ENCODE measurements at regions of chr3 and their contacts with region 1.

Region 1: GRCh38 chr3:183385698-183386613 is 42.5 kb downstream of the MCF2L2 start:
- DNase-seq: peak; percentile 76
- H3K4me3 ChIP-seq: no peak overlapping the region
- H3K27ac ChIP-seq: no peak overlapping the region
- H3K4me1 ChIP-seq: no peaks in the 10 kb centered on the region
- H3K27me3 ChIP-seq: no peaks in the 10 kb centered on the region
- CTCF ChIP-seq: peak; percentile 65 to 71
- POLR2A ChIP-seq: no peak

Region 2: GRCh38 chr3:183122257-183122932 is 263.6 kb before region 1 on chr3:
- CTCF ChIA-PET with region 1: interaction called, 105 read pairs
- POLR2A ChIA-PET with region 1: no interaction called
- dilution Hi-C with region 1: no loop called
- intact Hi-C with region 1: loop called (anchors 1 kb)
- DNase-seq: peak; percentile 95
- H3K4me3 ChIP-seq: no peak overlapping the region
- H3K27ac ChIP-seq: peak overlapping the region; percentile 58
- H3K4me1 ChIP-seq: peaks cover 27% of the 10 kb centered on the region
- H3K27me3 ChIP-seq: peaks cover 3 to 4% of the 10 kb centered on the region in 2 experiments
- CTCF ChIP-seq: peak; percentile 56 to 66
- POLR2A ChIP-seq: no peak

Region 3: GRCh38 chr3:183252973-183253901 is 132.7 kb before region 1 on chr3 and contains the start of gene B3GNT5:
- CTCF ChIA-PET with region 1: interaction called, 41 read pairs
- POLR2A ChIA-PET with region 1: no interaction called
- dilution Hi-C with region 1: no loop called
- intact Hi-C with region 1: loop called (anchors 1 kb)
- DNase-seq: peak; percentile 71
- H3K4me3 ChIP-seq: peak within 1 kb of the TSS; percentile 51 to 75 (median 62)
- H3K27ac ChIP-seq: peak within 1 kb of the TSS; percentile 54
- H3K4me1 ChIP-seq: peaks cover 13% of the 10 kb centered on the region
- H3K27me3 ChIP-seq: no peaks in the 10 kb centered on the region
- CTCF ChIP-seq: no peak
- POLR2A ChIP-seq: no peak
- total RNA-seq, gene B3GNT5: 25.6 and 29.4 TPM in 2 replicates

Region 4: GRCh38 chr3:183265834-183266417 is 120.0 kb before region 1 on chr3:
- CTCF ChIA-PET with region 1: interaction called, 11 read pairs
- POLR2A ChIA-PET with region 1: no interaction called
- dilution Hi-C with region 1: no loop called
- intact Hi-C with region 1: no loop called
- DNase-seq: peak; percentile 83
- H3K4me3 ChIP-seq: no peak overlapping the region
- H3K27ac ChIP-seq: peak overlapping the region; percentile 31
- H3K4me1 ChIP-seq: peaks cover 18% of the 10 kb centered on the region
- H3K27me3 ChIP-seq: no peaks in the 10 kb centered on the region
- CTCF ChIP-seq: no peak
- POLR2A ChIP-seq: no peak

Region 5: GRCh38 chr3:183328823-183329222 is 57.1 kb before region 1 on chr3:
- CTCF ChIA-PET with region 1: interaction called, 7 read pairs
- POLR2A ChIA-PET with region 1: no interaction called
- dilution Hi-C with region 1: no loop called
- intact Hi-C with region 1: loop called (anchors 2 kb)
- DNase-seq: no peak
- H3K4me3 ChIP-seq: no peak overlapping the region
- H3K27ac ChIP-seq: no peak overlapping the region
- H3K4me1 ChIP-seq: peaks cover 24% of the 10 kb centered on the region
- H3K27me3 ChIP-seq: no peaks in the 10 kb centered on the region
- CTCF ChIP-seq: no peak
- POLR2A ChIP-seq: no peak

Region 6: GRCh38 chr3:183537295-183537730 is 151.4 kb after region 1 on chr3:
- CTCF ChIA-PET with region 1: no interaction called
- POLR2A ChIA-PET with region 1: no interaction called
- dilution Hi-C with region 1: no loop called
- intact Hi-C with region 1: no loop called
- DNase-seq: no peak
- H3K4me3 ChIP-seq: no peak overlapping the region
- H3K27ac ChIP-seq: no peak overlapping the region
- H3K4me1 ChIP-seq: no peaks in the 10 kb centered on the region
- H3K27me3 ChIP-seq: no peaks in the 10 kb centered on the region
- CTCF ChIP-seq: no peak
- POLR2A ChIP-seq: no peak

Region 7: GRCh38 chr3:183766745-183767606 is 381.0 kb after region 1 on chr3:
- CTCF ChIA-PET with region 1: interaction called, 6 read pairs
- POLR2A ChIA-PET with region 1: no interaction called
- dilution Hi-C with region 1: no loop called
- intact Hi-C with region 1: loop called (anchors 5 kb)
- DNase-seq: peak; percentile 74
- H3K4me3 ChIP-seq: no peak overlapping the region
- H3K27ac ChIP-seq: no peak overlapping the region
- H3K4me1 ChIP-seq: peaks cover 22% of the 10 kb centered on the region
- H3K27me3 ChIP-seq: no peaks in the 10 kb centered on the region
- CTCF ChIP-seq: peak; percentile 69 to 80
- POLR2A ChIP-seq: no peak

Measured in endothelial cell of umbilical vein (primary cell).